ENCODE measurements at regions of chr13 and their contacts with region 1.

Region 1: GRCh38 chr13:44758630-44759383 is 182.7 kb upstream of the TSC22D1 start:
- DNase-seq: no peak
- ATAC-seq: peak; percentile 44 to 65 (median 48)
- H3K4me3 ChIP-seq: peak overlapping the region; percentile 49
- H3K27ac ChIP-seq: peak overlapping the region; percentile 97
- H3K4me1 ChIP-seq: peaks cover 12% of the 10 kb centered on the region
- H3K27me3 ChIP-seq: no peaks in the 10 kb centered on the region
- CTCF ChIP-seq: no peak

Region 2: GRCh38 chr13:44710576-44710975 is 48.2 kb before region 1 on chr13:
- intact Hi-C with region 1: no loop called
- DNase-seq: no peak
- ATAC-seq: peak; percentile 66 to 80 (median 68)
- H3K4me3 ChIP-seq: no peak overlapping the region
- H3K27ac ChIP-seq: no peak overlapping the region
- H3K4me1 ChIP-seq: peaks cover 22% of the 10 kb centered on the region
- H3K27me3 ChIP-seq: no peaks in the 10 kb centered on the region
- CTCF ChIP-seq: no peak

Region 3: GRCh38 chr13:44848920-44849676 is 90.3 kb after region 1 on chr13:
- intact Hi-C with region 1: loop called (anchors 5 kb)
- DNase-seq: no peak
- ATAC-seq: peak in 1 of 4 donors; percentile 34
- H3K4me3 ChIP-seq: no peak overlapping the region
- H3K27ac ChIP-seq: peak overlapping the region; percentile 27
- H3K4me1 ChIP-seq: peaks cover 20% of the 10 kb centered on the region
- H3K27me3 ChIP-seq: no peaks in the 10 kb centered on the region
- CTCF ChIP-seq: no peak

Region 4: GRCh38 chr13:44854313-44855060 is 95.7 kb after region 1 on chr13:
- intact Hi-C with region 1: loop called (anchors 5 kb)
- DNase-seq: peak; percentile 80 to 94
- ATAC-seq: peak; percentile 94 to 96 (median 96)
- H3K4me3 ChIP-seq: peak overlapping the region; percentile 41
- H3K27ac ChIP-seq: peak overlapping the region; percentile 92
- H3K4me1 ChIP-seq: peaks cover 21% of the 10 kb centered on the region
- H3K27me3 ChIP-seq: no peaks in the 10 kb centered on the region
- CTCF ChIP-seq: no peak